ENCODE measurements at regions of chr17 and their contacts with region 1.

Region 1: GRCh38 chr17:64506576-64507477 is at the start of gene CEP95:
- DNase-seq: peak; percentile 97
- ATAC-seq: peak; percentile 75
- H3K4me3 ChIP-seq: peak within 1 kb of the TSS; percentile 94 to 100 (median 99)
- H3K27ac ChIP-seq: peak within 1 kb of the TSS; percentile 99
- H3K4me1 ChIP-seq: peaks cover 43% of the 10 kb centered on the region
- H3K27me3 ChIP-seq: peaks cover 0 to 3% of the 10 kb centered on the region in 2 experiments; a peak in 1 of 5 replicates
- CTCF ChIP-seq: no peak
- EP300 ChIP-seq: peak in 1 of 2 experiments; percentile 8; a peak in 2 of 4 replicates
- POLR2A ChIP-seq: peak; percentile 75 to 87
- RAD21 ChIP-seq: 0 out of 2 replicates have a peak, but pooled peaks have one; percentile 34
- total RNA-seq, gene CEP95: 31.9 and 68.8 TPM in 2 replicates

Region 2: GRCh38 chr17:63842540-63843386 is 664.1 kb before region 1 on chr17 and contains the start of gene SMARCD2:
- CTCF ChIA-PET with region 1: no interaction called
- POLR2A ChIA-PET with region 1: no interaction called
- in situ Hi-C with region 1: loop called (anchors 10 kb)
- intact Hi-C with region 1: no loop called
- DNase-seq: peak; percentile 99
- ATAC-seq: peak; percentile 80
- H3K4me3 ChIP-seq: peak within 1 kb of the TSS; percentile 85 to 98 (median 97)
- H3K27ac ChIP-seq: peak within 1 kb of the TSS; percentile 92
- H3K4me1 ChIP-seq: peaks cover 44% of the 10 kb centered on the region
- H3K27me3 ChIP-seq: no peaks in the 10 kb centered on the region; a peak in 1 of 5 replicates
- CTCF ChIP-seq: peak; percentile 41
- EP300 ChIP-seq: peak; percentile 57 to 78; a peak in 3 of 4 replicates
- POLR2A ChIP-seq: peak; percentile 54 to 81
- RAD21 ChIP-seq: peak; percentile 95
- total RNA-seq, gene SMARCD2: 139 and 150 TPM in 2 replicates

Region 3: DNA sequence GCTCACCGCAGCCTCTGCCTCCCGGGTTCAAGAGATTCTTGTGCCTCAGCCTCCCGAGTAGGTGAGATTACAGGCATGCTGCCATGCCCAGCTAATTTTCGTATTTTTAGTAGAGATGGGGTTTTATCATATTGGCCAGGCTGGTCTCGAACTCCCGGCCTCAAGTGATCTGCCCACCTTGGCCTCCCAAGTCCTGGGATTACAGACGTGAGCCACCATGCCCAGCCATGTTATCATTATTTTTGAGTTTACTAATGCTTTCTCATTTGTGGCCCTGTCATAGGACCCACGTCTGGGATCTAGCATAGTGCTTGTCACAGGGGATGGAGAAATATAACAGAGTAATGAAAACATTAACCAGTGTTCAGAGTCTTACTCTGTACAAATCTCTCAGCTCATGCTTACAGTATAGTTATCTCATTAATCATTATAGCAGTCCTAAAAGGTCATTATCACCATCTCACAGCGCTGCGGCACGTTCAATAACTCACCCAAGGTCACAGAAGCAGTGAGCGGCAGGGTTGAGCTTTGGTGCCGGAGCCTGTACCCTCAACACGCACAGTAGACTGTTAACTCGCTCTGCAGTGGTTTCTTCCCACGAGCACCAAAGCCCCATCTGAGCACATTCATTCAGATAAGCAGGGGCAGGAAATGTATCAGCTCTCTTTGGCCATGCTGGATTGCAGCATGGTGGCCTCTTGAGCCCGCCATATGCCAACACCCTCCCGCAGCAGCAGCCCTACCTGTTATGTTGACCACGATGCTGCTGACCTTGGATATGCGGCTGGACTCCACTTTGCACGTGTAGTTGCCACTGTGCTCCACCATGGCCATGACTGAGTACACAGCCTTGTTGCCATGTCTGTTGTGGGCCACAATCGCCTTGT is 137.6 kb before region 1 on chr17:
- CTCF ChIA-PET with region 1: no interaction called
- POLR2A ChIA-PET with region 1: interaction called, 11 read pairs
- in situ Hi-C with region 1: no loop called
- intact Hi-C with region 1: no loop called
- DNase-seq: peak; percentile 76
- ATAC-seq: peak; percentile 96
- H3K4me3 ChIP-seq: peak overlapping the region in 2 of 3 experiments; percentile 29 to 34; a peak in 2 of 6 replicates
- H3K27ac ChIP-seq: peak overlapping the region; percentile 66
- H3K4me1 ChIP-seq: peaks cover 18% of the 10 kb centered on the region
- H3K27me3 ChIP-seq: no peaks in the 10 kb centered on the region
- CTCF ChIP-seq: no peak
- EP300 ChIP-seq: peak in 1 of 2 experiments; percentile 44; a peak in 1 of 4 replicates
- POLR2A ChIP-seq: no peak; a peak in 1 of 4 replicates
- RAD21 ChIP-seq: no peak

Region 4: DNA sequence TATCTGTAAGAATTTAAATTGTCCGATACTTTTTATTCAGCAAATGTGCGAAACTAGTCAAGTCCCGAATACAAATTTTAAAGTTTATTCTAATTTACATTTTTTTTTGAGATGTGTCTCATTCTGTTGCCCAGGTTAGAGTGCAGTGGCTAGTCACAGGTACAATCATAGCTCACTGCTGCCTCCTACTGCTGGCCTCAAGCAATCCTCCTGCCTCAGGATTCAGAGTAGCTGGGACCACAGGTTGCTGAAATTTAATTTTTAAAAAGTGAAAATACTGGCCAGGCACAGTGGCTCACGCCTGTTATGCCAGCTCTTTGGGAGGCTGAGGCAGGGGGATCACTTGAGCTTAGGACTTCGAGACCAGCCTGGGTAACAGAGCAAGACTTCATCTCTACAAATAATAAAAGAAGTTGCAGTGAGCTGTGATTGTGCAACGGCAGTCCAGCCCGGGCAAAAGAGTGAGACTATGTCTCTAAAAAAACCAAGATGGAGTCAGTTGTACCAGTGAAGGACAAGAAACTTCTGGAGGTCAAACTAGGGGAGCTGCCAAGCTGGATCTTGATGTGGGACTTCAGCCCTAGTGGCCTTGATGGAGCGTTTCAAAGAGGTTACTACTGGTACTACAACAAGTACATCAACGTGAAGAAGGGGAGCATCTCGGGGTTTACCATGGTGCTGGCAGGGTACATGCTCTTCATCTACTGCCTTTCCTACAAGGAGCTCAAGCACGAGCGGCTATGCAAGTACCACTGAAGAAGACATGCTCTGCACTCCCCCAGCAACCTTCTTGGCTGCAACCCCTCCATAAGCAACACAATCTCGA is 15.6 kb before region 1 on chr17:
- CTCF ChIA-PET with region 1: no interaction called
- POLR2A ChIA-PET with region 1: interaction called, 202 read pairs
- in situ Hi-C with region 1: no loop called
- intact Hi-C with region 1: no loop called
- DNase-seq: peak; percentile 57
- ATAC-seq: peak; percentile 63
- H3K4me3 ChIP-seq: no peak overlapping the region
- H3K27ac ChIP-seq: no peak overlapping the region
- H3K4me1 ChIP-seq: peaks cover 26% of the 10 kb centered on the region
- H3K27me3 ChIP-seq: no peaks in the 10 kb centered on the region; a peak in 1 of 5 replicates
- CTCF ChIP-seq: peak; percentile 70
- EP300 ChIP-seq: no peak
- POLR2A ChIP-seq: no peak
- RAD21 ChIP-seq: peak; percentile 40; the same call in 1 of the 2 replicates

Region 5: GRCh38 chr17:64599187-64599676 is 92.4 kb after region 1 on chr17:
- CTCF ChIA-PET with region 1: no interaction called
- POLR2A ChIA-PET with region 1: no interaction called
- in situ Hi-C with region 1: no loop called
- intact Hi-C with region 1: no loop called
- DNase-seq: no peak
- ATAC-seq: no peak
- H3K4me3 ChIP-seq: no peak overlapping the region
- H3K27ac ChIP-seq: no peak overlapping the region
- H3K4me1 ChIP-seq: peaks cover 12% of the 10 kb centered on the region
- H3K27me3 ChIP-seq: no peaks in the 10 kb centered on the region
- CTCF ChIP-seq: no peak
- EP300 ChIP-seq: no peak
- POLR2A ChIP-seq: no peak
- RAD21 ChIP-seq: no peak

Region 6: GRCh38 chr17:64648234-64648633 is 141.4 kb after region 1 on chr17:
- CTCF ChIA-PET with region 1: no interaction called
- POLR2A ChIA-PET with region 1: interaction called, 4 read pairs
- in situ Hi-C with region 1: no loop called
- intact Hi-C with region 1: loop called (anchors 2 kb)
- DNase-seq: no peak
- ATAC-seq: no peak
- H3K4me3 ChIP-seq: no peak overlapping the region
- H3K27ac ChIP-seq: no peak overlapping the region
- H3K4me1 ChIP-seq: peaks cover 14% of the 10 kb centered on the region
- H3K27me3 ChIP-seq: no peaks in the 10 kb centered on the region
- CTCF ChIP-seq: no peak
- EP300 ChIP-seq: no peak
- POLR2A ChIP-seq: no peak
- RAD21 ChIP-seq: no peak

Region 7: GRCh38 chr17:64661976-64662773 is 155.3 kb after region 1 on chr17 and contains the start of gene SMURF2:
- CTCF ChIA-PET with region 1: no interaction called
- POLR2A ChIA-PET with region 1: interaction called, 18 read pairs
- in situ Hi-C with region 1: no loop called
- intact Hi-C with region 1: loop called (anchors 5 kb)
- DNase-seq: peak; percentile 56
- ATAC-seq: peak; percentile 79
- H3K4me3 ChIP-seq: peak within 1 kb of the TSS; percentile 87 to 94 (median 90)
- H3K27ac ChIP-seq: peak within 1 kb of the TSS; percentile 70
- H3K4me1 ChIP-seq: peaks cover 49% of the 10 kb centered on the region
- H3K27me3 ChIP-seq: no peaks in the 10 kb centered on the region
- CTCF ChIP-seq: no peak
- EP300 ChIP-seq: no peak
- POLR2A ChIP-seq: peak; percentile 82 to 91
- RAD21 ChIP-seq: peak; percentile 32
- total RNA-seq, gene SMURF2: 24.3 and 29.3 TPM in 2 replicates

Measured in HepG2 (cell line).